ENCODE measurements at regions of chr1 and their contacts with region 1.

Region 1: GRCh38 chr1:24744911-24745710 is at the start of gene CLIC4:
- DNase-seq: peak; percentile 97 to 100 (median 98)
- ATAC-seq: peak; percentile 97
- H3K4me3 ChIP-seq: peak within 1 kb of the TSS; percentile 55
- H3K4me3 Mint-ChIP-seq: peak within 1 kb of the TSS; percentile 84 to 94 (median 89)
- H3K27ac ChIP-seq: peak within 1 kb of the TSS; percentile 57
- H3K27ac Mint-ChIP-seq: peak within 1 kb of the TSS; percentile 18 to 89 (median 79)
- H3K4me1 ChIP-seq: peaks cover 0 to 4% of the 10 kb centered on the region in 2 donors
- H3K4me1 Mint-ChIP-seq: peaks cover 7 to 57% (median 15%) of the 10 kb centered on the region in 7 donors
- H3K27me3 ChIP-seq: no peaks in the 10 kb centered on the region
- H3K27me3 Mint-ChIP-seq: peaks cover 0 to 10% (median 0%) of the 10 kb centered on the region in 5 donors
- total RNA-seq, gene CLIC4: 1.4 to 16.8 (median 5.1) TPM

Region 2: GRCh38 chr1:24415334-24415909 is 329.7 kb before region 1 on chr1 and contains the start of gene NIPAL3:
- CTCF ChIA-PET with region 1: no interaction called
- POLR2A ChIA-PET with region 1: no interaction called
- intact Hi-C with region 1: loop called in 1 of 2 experiments (anchors 1 kb)
- DNase-seq: peak; percentile 81 to 99 (median 97)
- ATAC-seq: peak; percentile 98
- H3K4me3 ChIP-seq: peak within 1 kb of the TSS; percentile 76
- H3K4me3 Mint-ChIP-seq: peak within 1 kb of the TSS; percentile 95 to 100 (median 98)
- H3K27ac ChIP-seq: peak within 1 kb of the TSS; percentile 74
- H3K27ac Mint-ChIP-seq: peak within 1 kb of the TSS; percentile 75 to 99 (median 90)
- H3K4me1 ChIP-seq: peaks cover 23 to 44% of the 10 kb centered on the region in 2 donors
- H3K4me1 Mint-ChIP-seq: peaks cover 51 to 91% (median 75%) of the 10 kb centered on the region in 7 donors
- H3K27me3 ChIP-seq: no peaks in the 10 kb centered on the region
- H3K27me3 Mint-ChIP-seq: no peaks in the 10 kb centered on the region
- total RNA-seq, gene NIPAL3: 35.5 to 65.0 (median 54.5) TPM

Region 3: GRCh38 chr1:24688621-24689195 is 56.4 kb before region 1 on chr1:
- CTCF ChIA-PET with region 1: interaction called, 6 read pairs
- POLR2A ChIA-PET with region 1: no interaction called
- intact Hi-C with region 1: loop called (anchors 5 to 10 kb)
- DNase-seq: peak; percentile 24 to 64 (median 50)
- ATAC-seq: peak; percentile 87
- H3K4me3 ChIP-seq: no peak overlapping the region
- H3K4me3 Mint-ChIP-seq: no peak overlapping the region
- H3K27ac ChIP-seq: no peak overlapping the region
- H3K27ac Mint-ChIP-seq: peak overlapping the region in 1 of 9 donors; percentile 76
- H3K4me1 ChIP-seq: no peaks in the 10 kb centered on the region
- H3K4me1 Mint-ChIP-seq: peaks cover 0 to 5% (median 0%) of the 10 kb centered on the region in 7 donors
- H3K27me3 ChIP-seq: no peaks in the 10 kb centered on the region
- H3K27me3 Mint-ChIP-seq: no peaks in the 10 kb centered on the region

Region 4: DNA sequence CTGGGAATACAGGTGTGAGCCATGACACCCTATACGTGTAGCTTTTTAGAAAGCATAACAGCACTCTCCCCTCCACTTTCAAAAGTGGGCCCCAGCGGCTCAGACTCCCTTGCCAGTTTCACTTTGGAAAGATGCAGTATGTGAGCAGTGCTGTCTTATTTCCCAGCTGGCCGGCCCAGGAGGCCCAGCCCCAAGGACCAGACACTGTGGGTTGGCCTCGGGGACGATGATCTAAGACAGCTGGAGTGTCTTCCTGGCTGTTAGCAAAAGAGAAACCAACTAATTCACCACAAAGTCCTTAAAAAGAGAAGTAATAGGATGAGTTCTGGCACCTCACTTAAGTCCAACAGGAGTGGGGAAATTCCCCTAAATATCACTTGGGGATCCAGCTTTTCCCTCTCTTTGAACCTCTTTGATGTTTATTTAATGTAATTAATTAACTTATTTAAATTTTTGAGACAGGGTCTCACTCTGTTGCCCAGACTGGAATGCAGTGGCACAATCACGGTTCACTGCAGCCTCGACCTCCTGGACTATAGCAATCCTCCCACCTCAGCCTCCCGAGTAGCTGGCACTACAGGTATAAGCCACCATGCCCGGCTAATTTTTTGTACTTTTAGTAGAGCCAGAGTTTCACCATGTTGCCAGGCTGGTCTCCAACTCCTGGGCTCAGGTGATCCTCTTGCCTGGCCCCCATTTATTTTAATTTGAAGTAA is 17.5 kb before region 1 on chr1:
- CTCF ChIA-PET with region 1: interaction called, 3 read pairs
- POLR2A ChIA-PET with region 1: no interaction called
- intact Hi-C with region 1: loop called (anchors 1 to 2 kb)
- DNase-seq: no peak
- ATAC-seq: peak; percentile 83
- H3K4me3 ChIP-seq: no peak overlapping the region
- H3K4me3 Mint-ChIP-seq: peak overlapping the region in 2 of 10 donors; percentile 35 to 36
- H3K27ac ChIP-seq: no peak overlapping the region
- H3K27ac Mint-ChIP-seq: peak overlapping the region in 3 of 9 donors; percentile 21 to 48 (median 40)
- H3K4me1 ChIP-seq: no peaks in the 10 kb centered on the region
- H3K4me1 Mint-ChIP-seq: peaks cover 0 to 13% (median 3%) of the 10 kb centered on the region in 7 donors
- H3K27me3 ChIP-seq: no peaks in the 10 kb centered on the region
- H3K27me3 Mint-ChIP-seq: peaks cover 0 to 6% (median 0%) of the 10 kb centered on the region in 5 donors

Region 5: GRCh38 chr1:24786191-24786590 is 41.1 kb after region 1 on chr1:
- CTCF ChIA-PET with region 1: no interaction called
- POLR2A ChIA-PET with region 1: no interaction called
- intact Hi-C with region 1: no loop called
- DNase-seq: no peak
- ATAC-seq: no peak
- H3K4me3 ChIP-seq: no peak overlapping the region
- H3K4me3 Mint-ChIP-seq: no peak overlapping the region
- H3K27ac ChIP-seq: no peak overlapping the region
- H3K27ac Mint-ChIP-seq: no peak overlapping the region
- H3K4me1 ChIP-seq: no peaks in the 10 kb centered on the region
- H3K4me1 Mint-ChIP-seq: peaks cover 0 to 2% (median 0%) of the 10 kb centered on the region in 7 donors
- H3K27me3 ChIP-seq: no peaks in the 10 kb centered on the region
- H3K27me3 Mint-ChIP-seq: no peaks in the 10 kb centered on the region

Region 6: GRCh38 chr1:24923485-24924113 is 178.5 kb after region 1 on chr1:
- CTCF ChIA-PET with region 1: no interaction called
- POLR2A ChIA-PET with region 1: interaction called, 3 read pairs
- intact Hi-C with region 1: loop called in 1 of 2 experiments (anchors 2 kb)
- DNase-seq: no peak
- ATAC-seq: no peak
- H3K4me3 ChIP-seq: peak overlapping the region; percentile 29
- H3K4me3 Mint-ChIP-seq: peak overlapping the region in 7 of 10 donors; percentile 6 to 68 (median 53)
- H3K27ac ChIP-seq: peak overlapping the region; percentile 61
- H3K27ac Mint-ChIP-seq: peak overlapping the region; percentile 38 to 81 (median 54)
- H3K4me1 ChIP-seq: peaks cover 49 to 84% of the 10 kb centered on the region in 2 donors
- H3K4me1 Mint-ChIP-seq: peaks cover 45 to 85% (median 73%) of the 10 kb centered on the region in 7 donors
- H3K27me3 ChIP-seq: no peaks in the 10 kb centered on the region
- H3K27me3 Mint-ChIP-seq: no peaks in the 10 kb centered on the region

Region 7: GRCh38 chr1:25247024-25247828 is 502.1 kb after region 1 on chr1 and contains the start of gene RSRP1:
- CTCF ChIA-PET with region 1: no interaction called
- POLR2A ChIA-PET with region 1: interaction called, 5 read pairs
- intact Hi-C with region 1: loop called (anchors 2 to 10 kb)
- DNase-seq: peak; percentile 99 to 100 (median 99)
- ATAC-seq: peak; percentile 91
- H3K4me3 ChIP-seq: peak within 1 kb of the TSS; percentile 94
- H3K4me3 Mint-ChIP-seq: peak within 1 kb of the TSS; percentile 96 to 99 (median 97)
- H3K27ac ChIP-seq: peak within 1 kb of the TSS; percentile 98
- H3K27ac Mint-ChIP-seq: peak within 1 kb of the TSS; percentile 98 to 100 (median 100)
- H3K4me1 ChIP-seq: peaks cover 30 to 35% of the 10 kb centered on the region in 2 donors
- H3K4me1 Mint-ChIP-seq: peaks cover 28 to 65% (median 51%) of the 10 kb centered on the region in 7 donors
- H3K27me3 ChIP-seq: no peaks in the 10 kb centered on the region
- H3K27me3 Mint-ChIP-seq: peaks cover 0 to 8% (median 0%) of the 10 kb centered on the region in 5 donors
- total RNA-seq, gene RSRP1: 230 to 449 (median 425) TPM